Right ventricle myocardium superior (tissue), 1 donor: ENCODE measurements at regions of chr2 and their contacts with region 1.

Region 1: DNA sequence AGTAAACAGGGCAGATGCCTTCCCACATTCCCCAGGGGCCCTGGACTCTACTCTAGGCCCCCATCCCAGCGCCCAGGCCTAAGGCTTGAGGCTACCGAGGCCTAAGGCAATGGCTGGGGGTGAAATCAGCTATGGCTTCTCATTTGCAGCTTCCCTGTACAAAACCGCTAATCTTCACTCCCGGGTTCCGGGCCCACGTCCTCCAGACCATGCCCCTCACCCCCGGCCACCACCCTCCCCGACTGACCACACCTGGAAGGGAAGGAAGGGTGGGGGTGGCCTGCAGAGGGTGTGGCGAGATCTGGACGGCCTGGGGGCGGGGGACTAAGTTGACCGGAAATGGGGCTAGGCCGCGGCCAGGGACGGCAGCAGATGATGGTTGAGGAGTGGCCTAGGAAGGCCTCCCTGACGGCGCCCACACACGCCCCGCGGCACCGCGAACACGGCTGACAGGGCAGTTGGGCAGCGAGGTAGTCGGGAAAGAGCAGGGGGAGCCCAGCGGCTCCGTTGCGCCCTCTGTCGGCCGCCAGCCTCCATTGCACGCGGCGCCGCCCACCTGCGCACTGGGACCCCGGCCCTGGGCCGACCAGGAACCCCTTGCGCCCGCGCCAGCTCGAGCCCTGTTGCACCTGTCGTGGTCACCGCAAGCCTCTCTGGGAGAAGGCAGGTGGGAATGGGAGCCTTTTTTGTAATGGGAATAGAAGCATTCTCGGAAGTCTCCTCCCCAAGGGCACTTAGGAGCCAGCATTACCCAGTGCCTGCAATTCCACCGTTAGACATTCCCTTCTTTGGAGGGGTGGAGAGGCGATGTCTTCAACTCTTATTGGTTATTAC is 117.1 kb upstream of the STPG4 start:
- DNase-seq: peak; percentile 84
- ATAC-seq: peak; percentile 88

Region 2: DNA sequence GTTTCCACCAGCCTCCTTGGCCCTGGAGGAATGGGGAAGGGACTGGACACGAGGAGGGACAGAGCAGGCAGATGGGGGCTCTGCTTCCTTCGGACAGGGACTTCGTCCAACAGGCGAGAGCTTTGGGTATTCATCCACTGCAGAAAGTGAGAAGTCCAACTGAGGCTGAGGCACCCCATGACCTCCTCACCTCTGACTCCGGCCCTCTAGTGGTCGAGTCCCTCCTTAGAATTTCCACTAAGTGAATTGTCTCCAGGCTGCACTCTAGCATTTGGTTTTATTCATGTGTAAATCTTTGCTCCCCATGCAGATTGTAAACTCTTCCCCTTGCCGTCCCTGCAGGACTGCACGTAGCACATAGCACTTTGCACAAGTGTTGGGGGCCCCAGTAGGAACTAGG is 717.2 kb before region 1 on chr2:
- intact Hi-C with region 1: no loop called
- DNase-seq: no peak
- ATAC-seq: no peak

Region 3: GRCh38 chr2:47309952-47310800 is 37.9 kb after region 1 on chr2:
- intact Hi-C with region 1: loop called (anchors 5 kb)
- DNase-seq: no peak
- ATAC-seq: peak; percentile 48